ENCODE measurements at regions of chr2 and their contacts with region 1.

Region 1: GRCh38 chr2:157336137-157337010 is 10.8 kb upstream of the ERMN start:
- DNase-seq: peak; percentile 57
- H3K4me3 Mint-ChIP-seq: no peak overlapping the region
- H3K27ac Mint-ChIP-seq: no peak overlapping the region
- H3K4me1 Mint-ChIP-seq: peaks cover 50% of the 10 kb centered on the region
- H3K27me3 Mint-ChIP-seq: no peaks in the 10 kb centered on the region

Region 2: GRCh38 chr2:156935632-156936031 is 400.7 kb before region 1 on chr2:
- CTCF ChIA-PET with region 1: no interaction called
- POLR2A ChIA-PET with region 1: no interaction called
- DNase-seq: no peak
- H3K4me3 Mint-ChIP-seq: no peak overlapping the region
- H3K27ac Mint-ChIP-seq: no peak overlapping the region
- H3K4me1 Mint-ChIP-seq: no peaks in the 10 kb centered on the region
- H3K27me3 Mint-ChIP-seq: no peaks in the 10 kb centered on the region

Region 3: GRCh38 chr2:157221394-157221988 is 114.9 kb before region 1 on chr2:
- CTCF ChIA-PET with region 1: no interaction called
- POLR2A ChIA-PET with region 1: no interaction called
- DNase-seq: no peak
- H3K4me3 Mint-ChIP-seq: no peak overlapping the region
- H3K27ac Mint-ChIP-seq: no peak overlapping the region
- H3K4me1 Mint-ChIP-seq: no peaks in the 10 kb centered on the region
- H3K27me3 Mint-ChIP-seq: peaks cover 28% of the 10 kb centered on the region

Region 4: GRCh38 chr2:157283468-157283867 is 52.9 kb before region 1 on chr2:
- CTCF ChIA-PET with region 1: no interaction called
- POLR2A ChIA-PET with region 1: no interaction called
- DNase-seq: no peak
- H3K4me3 Mint-ChIP-seq: no peak overlapping the region
- H3K27ac Mint-ChIP-seq: no peak overlapping the region
- H3K4me1 Mint-ChIP-seq: no peaks in the 10 kb centered on the region
- H3K27me3 Mint-ChIP-seq: peaks cover 11% of the 10 kb centered on the region

Region 5: DNA sequence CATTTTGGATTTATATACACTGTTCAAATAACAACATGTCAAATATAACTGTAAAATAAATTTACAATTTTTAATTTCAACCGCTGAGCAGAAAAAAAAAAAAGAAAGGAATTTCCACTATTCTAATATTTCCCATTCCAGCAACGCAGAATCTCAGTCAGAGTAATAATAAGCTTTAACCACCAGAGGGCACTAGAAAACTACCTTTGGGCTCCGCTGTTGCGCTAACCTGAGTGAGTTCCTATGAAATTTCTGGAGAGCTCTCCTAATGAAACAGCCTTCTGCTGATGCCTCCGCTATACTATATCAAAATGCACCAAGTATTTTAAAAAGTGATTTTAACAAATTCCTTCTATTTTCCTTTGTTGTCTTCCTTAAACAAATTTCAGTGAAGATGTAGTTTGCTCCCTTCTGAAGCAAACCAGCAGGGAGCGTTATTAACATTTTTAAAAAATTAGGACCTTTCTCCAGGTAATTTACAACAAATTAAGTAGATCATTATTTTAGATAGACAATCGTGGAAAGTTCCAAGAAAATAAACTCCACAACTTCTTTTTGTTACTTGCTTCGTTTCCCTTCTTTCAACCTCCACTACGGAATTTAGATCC is 33.8 kb before region 1 on chr2:
- CTCF ChIA-PET with region 1: interaction called, 29 read pairs
- POLR2A ChIA-PET with region 1: no interaction called
- DNase-seq: peak; percentile 49
- H3K4me3 Mint-ChIP-seq: no peak overlapping the region
- H3K27ac Mint-ChIP-seq: no peak overlapping the region
- H3K4me1 Mint-ChIP-seq: peaks cover 24% of the 10 kb centered on the region
- H3K27me3 Mint-ChIP-seq: peaks cover 6% of the 10 kb centered on the region

Region 6: GRCh38 chr2:157321466-157321865 is 14.9 kb before region 1 on chr2:
- CTCF ChIA-PET with region 1: interaction called, 42 read pairs
- POLR2A ChIA-PET with region 1: no interaction called
- DNase-seq: no peak
- H3K4me3 Mint-ChIP-seq: no peak overlapping the region
- H3K27ac Mint-ChIP-seq: no peak overlapping the region
- H3K4me1 Mint-ChIP-seq: peaks cover 19% of the 10 kb centered on the region
- H3K27me3 Mint-ChIP-seq: no peaks in the 10 kb centered on the region

Region 7: GRCh38 chr2:157349949-157350515 is 13.7 kb after region 1 on chr2:
- CTCF ChIA-PET with region 1: interaction called, 27 read pairs
- POLR2A ChIA-PET with region 1: no interaction called
- DNase-seq: no peak
- H3K4me3 Mint-ChIP-seq: no peak overlapping the region
- H3K27ac Mint-ChIP-seq: no peak overlapping the region
- H3K4me1 Mint-ChIP-seq: peaks cover 8% of the 10 kb centered on the region
- H3K27me3 Mint-ChIP-seq: no peaks in the 10 kb centered on the region

Measured in activated CD4-positive, alpha-beta T cell treated with anti-CD3 and anti-CD28 coated beads, Interleukin-2, amount 10 ng/mL, durations not matched to agents 7 days and 5 days (primary cell).